GM12878 (cell line): ENCODE measurements at regions of chr17 and their contacts with region 1.

Region 1: GRCh38 chr17:12680407-12680897 is 14.8 kb downstream of the MYOCD start:
- DNase-seq: no peak
- ATAC-seq: no peak
- H3K4me3 ChIP-seq: no peak overlapping the region
- H3K27ac ChIP-seq: no peak overlapping the region
- H3K4me1 ChIP-seq: no peaks in the 10 kb centered on the region
- H3K27me3 ChIP-seq: no peaks in the 10 kb centered on the region
- CTCF ChIP-seq: no peak
- EP300 ChIP-seq: no peak
- POLR2A ChIP-seq: no peak
- RAD21 ChIP-seq: no peak

Region 2: DNA sequence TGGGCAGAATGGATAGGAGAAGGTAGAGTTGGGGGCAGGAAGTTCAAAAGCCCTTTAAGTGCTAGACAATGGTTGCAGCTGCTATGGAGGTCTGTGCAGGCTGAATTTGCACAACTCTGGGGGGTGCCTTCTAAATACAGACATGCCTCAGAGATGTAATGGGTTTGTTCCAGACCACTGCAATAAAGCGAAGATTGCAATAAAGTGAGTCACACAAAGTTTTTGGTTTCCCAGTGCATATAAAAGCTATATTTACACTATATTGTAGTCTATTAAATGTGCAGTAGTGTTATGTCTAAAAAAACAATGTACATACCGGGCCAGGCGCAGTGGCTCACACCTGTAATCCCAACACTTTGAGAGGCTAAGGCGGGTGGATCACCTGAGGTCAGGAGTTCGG is 75.2 kb before region 1 on chr17:
- CTCF ChIA-PET with region 1: no interaction called
- POLR2A ChIA-PET with region 1: no interaction called
- RAD21 ChIA-PET with region 1: no interaction called
- SMC1A ChIA-PET with region 1: no interaction called
- in situ Hi-C with region 1: no loop called
- intact Hi-C with region 1: loop called (anchors 10 kb)
- DNase-seq: no peak
- ATAC-seq: no peak
- H3K4me3 ChIP-seq: no peak overlapping the region
- H3K27ac ChIP-seq: no peak overlapping the region
- H3K4me1 ChIP-seq: no peaks in the 10 kb centered on the region
- H3K27me3 ChIP-seq: no peaks in the 10 kb centered on the region
- CTCF ChIP-seq: no peak
- EP300 ChIP-seq: no peak
- POLR2A ChIP-seq: no peak
- RAD21 ChIP-seq: no peak